ENCODE measurements at regions of chr12 and their contacts with region 1.

Region 1: GRCh38 chr12:69639400-69640016 is 28.8 kb upstream of the LRRC10 start:
- DNase-seq: peak; percentile 61
- ATAC-seq: peak; percentile 97
- H3K4me3 ChIP-seq: no peak overlapping the region
- H3K27ac ChIP-seq: no peak overlapping the region
- H3K4me1 ChIP-seq: no peaks in the 10 kb centered on the region
- H3K27me3 ChIP-seq: no peaks in the 10 kb centered on the region
- CTCF ChIP-seq: peak; percentile 80 to 93 (median 93); a peak in 5 of 6 replicates
- POLR2A ChIP-seq: no peak
- RAD21 ChIP-seq: peak; percentile 68

Region 2: DNA sequence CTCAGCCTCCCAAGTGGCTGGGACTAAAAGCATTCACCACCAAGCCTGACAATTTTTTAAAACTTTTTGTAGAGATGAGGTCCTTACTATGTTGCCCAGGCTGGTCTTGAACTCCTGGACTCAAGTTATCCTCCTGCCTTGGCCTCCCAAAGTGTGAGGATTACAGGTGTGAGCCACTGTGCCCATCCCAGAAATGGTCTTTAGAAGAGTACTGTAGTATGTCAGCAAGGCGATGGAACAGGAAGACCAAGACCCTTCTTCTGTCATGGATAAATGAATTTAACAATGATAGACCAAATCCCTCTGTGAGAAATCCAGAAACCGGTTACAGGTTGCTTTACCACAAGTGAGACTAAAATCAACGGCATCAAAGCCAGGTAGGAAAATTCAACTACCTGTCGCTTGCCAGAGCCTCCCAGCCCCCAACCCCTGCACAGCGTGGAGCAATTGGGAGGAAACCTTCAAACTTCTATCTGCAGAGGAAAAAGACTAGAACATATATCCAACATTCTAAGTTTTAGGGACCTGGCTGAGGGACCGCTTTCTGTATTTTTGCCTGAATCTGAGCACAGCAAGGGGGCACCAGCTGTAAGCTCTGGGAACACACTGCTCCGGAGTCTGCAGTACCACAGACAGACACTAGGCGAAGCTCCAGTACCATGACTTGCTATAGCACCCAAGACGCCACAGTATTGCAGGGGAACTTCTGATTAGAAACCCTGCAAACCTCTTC is 348.8 kb before region 1 on chr12:
- CTCF ChIA-PET with region 1: no interaction called
- POLR2A ChIA-PET with region 1: no interaction called
- RAD21 ChIA-PET with region 1: no interaction called
- intact Hi-C with region 1: loop called (anchors 1 kb)
- DNase-seq: peak; percentile 81
- ATAC-seq: peak; percentile 100
- H3K4me3 ChIP-seq: no peak overlapping the region
- H3K27ac ChIP-seq: no peak overlapping the region
- H3K4me1 ChIP-seq: no peaks in the 10 kb centered on the region
- H3K27me3 ChIP-seq: no peaks in the 10 kb centered on the region; the same call in 1 of the 2 replicates
- CTCF ChIP-seq: peak; percentile 97
- POLR2A ChIP-seq: no peak
- RAD21 ChIP-seq: peak; percentile 93

Region 3: GRCh38 chr12:69359531-69360347 is 279.8 kb before region 1 on chr12 and contains the start of gene YEATS4:
- CTCF ChIA-PET with region 1: interaction called, 3 read pairs
- POLR2A ChIA-PET with region 1: no interaction called
- RAD21 ChIA-PET with region 1: interaction called in 1 of 2 experiments, 4 read pairs
- intact Hi-C with region 1: loop called (anchors 2 kb)
- DNase-seq: peak; percentile 90
- ATAC-seq: peak; percentile 89
- H3K4me3 ChIP-seq: peak within 1 kb of the TSS; percentile 56 to 63
- H3K27ac ChIP-seq: peak within 1 kb of the TSS; percentile 99
- H3K4me1 ChIP-seq: peaks cover 5 to 24% of the 10 kb centered on the region in 2 experiments; a peak in 3 of 4 replicates
- H3K27me3 ChIP-seq: no peaks in the 10 kb centered on the region
- CTCF ChIP-seq: no peak
- POLR2A ChIP-seq: peak; percentile 24
- RAD21 ChIP-seq: no peak
- total RNA-seq, gene YEATS4: 32.0 TPM

Region 4: DNA sequence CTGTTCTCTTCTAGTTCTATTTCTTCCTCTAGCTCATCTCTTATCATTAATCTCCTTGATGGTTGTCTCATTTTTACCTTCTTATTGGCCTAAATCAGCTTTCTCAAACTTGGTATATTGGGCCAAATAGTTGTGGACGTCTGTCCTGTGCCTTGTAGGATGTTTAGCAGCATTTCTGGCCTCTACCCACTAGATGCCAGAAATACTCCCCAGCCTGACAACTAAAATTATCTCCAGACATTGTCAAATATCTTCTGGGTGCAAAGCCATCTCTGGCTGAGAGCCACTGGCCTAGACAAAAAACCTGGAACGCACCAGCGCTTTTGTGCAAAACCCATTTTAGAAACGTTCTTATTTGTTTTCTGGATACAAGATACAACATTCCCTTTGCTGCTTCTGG is 10.0 kb after region 1 on chr12:
- CTCF ChIA-PET with region 1: interaction called, 10 read pairs
- POLR2A ChIA-PET with region 1: interaction called, 3 read pairs
- RAD21 ChIA-PET with region 1: no interaction called
- intact Hi-C with region 1: no loop called
- DNase-seq: no peak
- ATAC-seq: no peak
- H3K4me3 ChIP-seq: no peak overlapping the region
- H3K27ac ChIP-seq: no peak overlapping the region
- H3K4me1 ChIP-seq: no peaks in the 10 kb centered on the region
- H3K27me3 ChIP-seq: no peaks in the 10 kb centered on the region
- CTCF ChIP-seq: no peak
- POLR2A ChIP-seq: no peak
- RAD21 ChIP-seq: no peak

Measured in HCT116 (cell line).